Heart left ventricle (tissue), 16 donors: ENCODE measurements at regions of chr19 and their contacts with region 1.

Region 1: DNA sequence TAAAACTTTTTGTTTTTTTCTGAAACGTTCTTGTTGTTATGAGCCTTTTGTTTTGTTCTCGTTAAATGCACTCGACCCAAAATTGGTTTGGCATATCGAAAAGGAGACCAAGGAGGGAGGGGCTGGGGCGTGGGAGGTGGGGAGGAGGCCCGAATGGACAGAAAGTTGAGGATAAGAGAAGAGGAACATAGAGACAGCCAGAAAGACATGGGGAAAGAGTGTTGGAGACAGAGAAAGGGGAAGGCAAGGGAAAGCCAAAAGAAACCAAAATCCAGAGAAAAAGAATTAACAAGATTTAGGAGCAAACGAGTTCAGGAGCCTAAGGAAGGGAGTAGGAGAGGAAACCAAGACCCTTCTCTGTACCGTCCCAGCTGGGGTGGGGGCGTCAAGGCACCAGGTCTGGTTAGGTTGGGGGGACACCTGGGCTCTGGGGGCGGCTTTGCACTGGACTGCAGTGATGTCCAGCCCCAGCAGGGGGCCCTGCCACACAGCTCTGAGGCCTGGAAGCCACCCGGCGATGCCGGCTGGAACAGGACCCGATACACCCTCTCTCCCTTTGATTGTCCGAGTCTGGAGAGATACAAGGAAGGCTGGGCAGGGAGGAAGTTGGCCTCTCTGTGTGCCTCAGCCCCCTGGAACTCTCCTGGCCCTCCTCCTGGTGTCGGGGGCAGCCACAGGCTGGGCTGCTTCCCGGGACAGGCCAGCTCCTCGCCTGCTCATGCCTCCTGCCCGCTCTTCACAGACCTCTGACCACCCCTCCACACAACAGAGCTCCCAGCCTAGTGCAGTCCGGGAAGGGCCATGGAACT is 11.6 kb upstream of the ASF1B start:
- DNase-seq: peak; percentile 71 to 89 (median 79)
- ATAC-seq: peak; percentile 81 to 89 (median 86)
- H3K4me3 ChIP-seq: peak overlapping the region in 4 of 12 donors; percentile 4 to 32 (median 10)
- H3K27ac ChIP-seq: peak overlapping the region in 11 of 12 donors; percentile 55 to 92 (median 83)
- H3K4me1 ChIP-seq: peaks cover 9 to 40% (median 27%) of the 10 kb centered on the region in 12 donors
- H3K27me3 ChIP-seq: no peaks in the 10 kb centered on the region
- CTCF ChIP-seq: peak; percentile 75 to 96 (median 88)
- POLR2A ChIP-seq: no peak

Region 2: GRCh38 chr19:13796301-13797057 is 351.5 kb before region 1 on chr19:
- intact Hi-C with region 1: no loop called
- DNase-seq: peak; percentile 76 to 89 (median 81)
- ATAC-seq: peak; percentile 10 to 53 (median 45)
- H3K4me3 ChIP-seq: peak overlapping the region in 11 of 12 donors; percentile 55 to 92 (median 84)
- H3K27ac ChIP-seq: peak overlapping the region in 11 of 12 donors; percentile 24 to 95 (median 90)
- H3K4me1 ChIP-seq: peaks cover 0 to 36% (median 21%) of the 10 kb centered on the region in 12 donors
- H3K27me3 ChIP-seq: no peaks in the 10 kb centered on the region
- CTCF ChIP-seq: peak in 7 of 12 donors; percentile 8 to 49 (median 33)
- POLR2A ChIP-seq: no peak

Region 3: DNA sequence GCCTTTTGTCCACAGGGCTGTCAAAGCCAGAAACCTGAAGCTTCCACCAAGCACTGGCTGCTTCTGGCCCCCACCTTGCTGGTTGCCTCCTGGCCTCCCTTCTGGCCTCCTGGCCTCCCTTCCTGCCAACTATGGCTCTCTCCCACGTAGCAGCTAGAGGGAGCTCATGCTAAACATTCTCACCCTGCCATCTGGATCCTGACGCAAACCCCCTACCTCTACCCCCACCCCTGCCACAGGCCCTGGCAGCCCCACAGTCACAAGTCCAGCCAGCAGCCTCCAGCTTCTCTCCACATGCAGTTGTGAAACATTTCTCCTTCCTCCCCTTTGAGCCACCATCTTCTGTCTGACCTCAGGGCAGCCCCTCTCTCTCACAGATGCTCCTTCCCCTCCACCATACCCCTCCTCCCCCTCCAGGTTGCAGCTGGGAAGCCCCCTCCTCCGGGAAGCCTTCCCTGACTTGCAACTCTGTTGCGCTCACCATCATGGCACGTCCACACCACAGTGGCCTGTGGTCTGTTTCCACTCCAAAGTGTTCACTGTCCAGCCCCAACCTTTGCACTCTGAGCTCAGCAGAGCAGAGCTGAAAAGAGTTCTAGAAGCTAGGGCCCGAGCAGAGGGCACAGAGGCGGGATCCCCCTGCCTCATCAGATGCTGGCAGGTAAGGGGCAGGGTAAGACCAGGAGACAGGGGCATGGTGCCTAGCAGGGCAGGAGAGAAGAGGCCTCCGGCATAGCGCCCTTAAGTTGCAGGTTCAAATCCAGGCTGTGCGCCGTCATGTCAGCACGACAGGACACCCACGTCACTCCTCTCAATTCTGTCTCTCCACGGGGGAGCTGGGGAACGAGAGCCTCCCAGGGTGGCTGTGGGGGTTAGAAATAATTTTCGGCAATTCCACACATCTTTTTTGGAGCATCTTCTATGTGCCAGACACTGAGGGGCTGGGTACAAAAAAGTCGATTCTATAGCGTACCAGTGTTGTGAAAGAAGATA is 50.7 kb after region 1 on chr19:
- intact Hi-C with region 1: loop called in 2 of 10 experiments (anchors 5 to 10 kb)
- DNase-seq: no peak
- ATAC-seq: no peak
- H3K4me3 ChIP-seq: no peak overlapping the region
- H3K27ac ChIP-seq: no peak overlapping the region
- H3K4me1 ChIP-seq: peaks cover 0 to 5% (median 0%) of the 10 kb centered on the region in 12 donors
- H3K27me3 ChIP-seq: no peaks in the 10 kb centered on the region
- CTCF ChIP-seq: no peak
- POLR2A ChIP-seq: no peak

Region 4: DNA sequence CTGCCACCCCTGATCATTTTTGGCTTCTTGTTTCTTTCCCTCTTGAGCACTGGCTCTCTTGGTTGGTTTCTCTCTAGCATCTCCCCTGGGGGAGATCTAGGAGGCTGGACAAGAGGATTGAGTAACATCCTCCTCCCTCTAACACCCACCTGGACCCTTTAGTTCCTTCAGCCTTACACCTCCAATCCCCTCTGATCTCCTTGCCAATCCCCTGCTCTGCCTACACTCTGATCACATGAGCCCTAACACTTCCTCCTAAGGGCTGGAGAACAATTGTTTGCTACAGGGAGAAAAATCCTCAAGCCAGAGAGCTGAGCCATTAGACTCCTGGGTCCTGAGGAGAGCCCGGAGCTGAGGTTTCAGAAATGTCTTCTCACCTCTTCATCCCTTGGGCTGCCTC is 123.8 kb after region 1 on chr19:
- intact Hi-C with region 1: loop called in 2 of 10 experiments (anchors 10 kb)
- DNase-seq: no peak
- ATAC-seq: no peak
- H3K4me3 ChIP-seq: no peak overlapping the region
- H3K27ac ChIP-seq: no peak overlapping the region
- H3K4me1 ChIP-seq: peaks cover 0 to 5% (median 0%) of the 10 kb centered on the region in 12 donors
- H3K27me3 ChIP-seq: peaks cover 0 to 24% (median 7%) of the 10 kb centered on the region in 9 donors
- CTCF ChIP-seq: no peak
- POLR2A ChIP-seq: no peak

Region 5: DNA sequence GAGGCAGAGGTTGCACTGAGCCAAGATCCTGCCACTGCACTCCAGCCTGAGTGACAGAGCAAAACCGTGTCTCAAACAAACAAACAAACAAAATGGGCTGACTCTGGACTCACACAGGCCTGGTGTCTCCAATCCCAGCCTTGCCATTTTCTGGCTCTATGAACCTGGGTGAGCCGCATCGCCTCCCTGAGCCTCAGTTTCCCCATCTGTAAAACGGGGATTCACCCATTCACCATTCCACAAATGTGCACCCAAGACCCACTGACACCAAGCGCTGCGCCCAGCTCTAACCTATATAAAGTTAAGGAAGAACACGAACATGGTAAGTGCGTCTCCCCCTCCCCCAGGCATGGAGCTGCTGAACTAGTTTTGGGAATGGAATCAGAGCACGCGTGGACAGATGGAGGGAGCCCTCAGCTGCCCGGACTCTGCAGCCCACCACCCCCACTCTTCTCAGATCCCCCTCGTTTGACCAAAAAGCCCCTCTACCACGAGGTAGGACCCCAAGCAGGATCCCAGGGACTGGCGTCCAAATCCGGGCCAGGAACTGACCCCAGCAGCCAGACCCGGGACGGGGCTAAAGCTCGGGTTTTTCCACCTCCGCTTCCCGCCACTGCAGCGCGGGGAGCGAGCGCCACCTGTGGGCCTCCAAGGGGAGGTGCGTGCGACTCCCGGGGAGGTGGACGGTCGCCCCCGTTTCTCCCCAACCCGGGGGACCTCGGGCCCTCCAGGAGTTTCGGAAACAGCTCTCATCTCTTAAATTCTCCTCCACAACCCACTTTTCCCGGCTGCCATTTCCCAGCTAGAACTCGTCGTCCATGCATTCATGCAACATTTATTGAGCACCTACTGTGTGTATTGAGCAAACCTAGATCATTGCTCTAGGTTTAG is 200.2 kb after region 1 on chr19:
- intact Hi-C with region 1: loop called (anchors 1 to 5 kb)
- DNase-seq: peak; percentile 58 to 86 (median 72)
- ATAC-seq: peak; percentile 65 to 84 (median 82)
- H3K4me3 ChIP-seq: peak overlapping the region in 8 of 12 donors; percentile 12 to 41 (median 28)
- H3K27ac ChIP-seq: no peak overlapping the region
- H3K4me1 ChIP-seq: peaks cover 0 to 13% (median 2%) of the 10 kb centered on the region in 12 donors
- H3K27me3 ChIP-seq: no peaks in the 10 kb centered on the region
- CTCF ChIP-seq: peak; percentile 87 to 99 (median 96)
- POLR2A ChIP-seq: no peak

Region 6: GRCh38 chr19:14405758-14406644 is 258.0 kb after region 1 on chr19:
- intact Hi-C with region 1: loop called in 4 of 10 experiments (anchors 5 to 10 kb)
- DNase-seq: peak; percentile 83 to 94 (median 87)
- ATAC-seq: peak; percentile 85 to 94 (median 88)
- H3K4me3 ChIP-seq: peak overlapping the region in 9 of 12 donors; percentile 16 to 49 (median 36)
- H3K27ac ChIP-seq: peak overlapping the region in 11 of 12 donors; percentile 26 to 82 (median 61)
- H3K4me1 ChIP-seq: peaks cover 0 to 38% (median 6%) of the 10 kb centered on the region in 12 donors
- H3K27me3 ChIP-seq: no peaks in the 10 kb centered on the region
- CTCF ChIP-seq: peak; percentile 91 to 98 (median 95)
- POLR2A ChIP-seq: no peak